ENCODE measurements at regions of chr17 and their contacts with region 1.

Region 1: DNA sequence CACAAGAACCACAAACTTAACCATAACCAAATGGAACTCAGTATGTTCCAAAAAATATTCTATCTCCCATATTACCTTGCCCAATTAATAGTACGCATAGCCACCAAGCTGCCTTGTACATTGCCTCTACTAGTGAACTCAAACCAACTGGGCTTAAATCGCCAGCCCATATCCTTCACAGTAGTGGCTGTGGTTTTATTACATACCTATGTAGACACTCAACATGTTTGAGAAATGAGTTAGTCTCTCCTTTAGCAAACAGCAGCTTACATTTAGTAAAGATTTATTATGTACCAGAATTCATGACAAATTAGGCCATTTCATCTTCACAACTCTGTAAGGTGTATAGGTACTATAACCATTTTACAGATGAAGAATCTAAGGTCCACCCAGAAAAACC is 41.4 kb downstream of the GRB2 start:
- DNase-seq: no peak
- ATAC-seq: no peak
- H3K4me3 Mint-ChIP-seq: no peak overlapping the region
- H3K27ac Mint-ChIP-seq: peak overlapping the region; percentile 83
- H3K4me1 Mint-ChIP-seq: peaks cover 94% of the 10 kb centered on the region
- H3K27me3 Mint-ChIP-seq: no peaks in the 10 kb centered on the region

Region 2: DNA sequence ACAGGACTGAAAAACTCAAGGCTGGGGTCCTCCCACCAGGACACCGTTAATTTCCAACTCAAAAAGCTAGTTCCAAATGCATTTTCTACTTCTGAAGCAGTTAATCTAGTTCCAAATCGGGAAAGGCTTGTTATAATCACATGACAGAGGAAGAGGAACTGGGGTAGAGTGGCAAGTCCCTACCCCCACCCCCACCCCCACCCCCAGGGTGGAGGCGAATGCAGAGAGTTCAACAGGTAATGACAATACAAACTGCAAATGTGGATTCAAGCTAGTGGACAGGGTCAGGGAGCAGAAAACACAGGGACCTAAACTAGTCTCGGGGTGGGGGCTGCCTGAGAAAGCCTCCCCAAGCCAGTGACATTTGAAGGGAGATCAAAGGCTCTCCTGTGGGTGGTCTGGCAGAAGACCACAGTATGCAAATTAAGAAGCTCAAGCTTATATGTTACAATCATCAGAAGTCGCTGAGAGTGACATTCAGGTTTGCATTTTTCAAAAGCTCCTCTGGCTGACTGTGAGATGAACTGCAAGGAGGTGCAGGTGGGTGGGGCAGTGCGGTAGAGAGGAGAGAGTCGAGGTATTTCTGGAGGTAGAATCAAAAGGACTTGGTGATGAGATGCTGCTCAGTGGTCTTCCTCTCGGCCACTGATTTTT is 18.4 kb before region 1 on chr17:
- CTCF ChIA-PET with region 1: interaction called, 7 read pairs
- POLR2A ChIA-PET with region 1: interaction called, 5 read pairs
- intact Hi-C with region 1: loop called in 1 of 2 experiments (anchors 2 kb)
- DNase-seq: peak; percentile 74
- ATAC-seq: peak; percentile 58
- H3K4me3 Mint-ChIP-seq: peak overlapping the region; percentile 60
- H3K27ac Mint-ChIP-seq: peak overlapping the region; percentile 90
- H3K4me1 Mint-ChIP-seq: peaks cover 97% of the 10 kb centered on the region
- H3K27me3 Mint-ChIP-seq: no peaks in the 10 kb centered on the region

Region 3: DNA sequence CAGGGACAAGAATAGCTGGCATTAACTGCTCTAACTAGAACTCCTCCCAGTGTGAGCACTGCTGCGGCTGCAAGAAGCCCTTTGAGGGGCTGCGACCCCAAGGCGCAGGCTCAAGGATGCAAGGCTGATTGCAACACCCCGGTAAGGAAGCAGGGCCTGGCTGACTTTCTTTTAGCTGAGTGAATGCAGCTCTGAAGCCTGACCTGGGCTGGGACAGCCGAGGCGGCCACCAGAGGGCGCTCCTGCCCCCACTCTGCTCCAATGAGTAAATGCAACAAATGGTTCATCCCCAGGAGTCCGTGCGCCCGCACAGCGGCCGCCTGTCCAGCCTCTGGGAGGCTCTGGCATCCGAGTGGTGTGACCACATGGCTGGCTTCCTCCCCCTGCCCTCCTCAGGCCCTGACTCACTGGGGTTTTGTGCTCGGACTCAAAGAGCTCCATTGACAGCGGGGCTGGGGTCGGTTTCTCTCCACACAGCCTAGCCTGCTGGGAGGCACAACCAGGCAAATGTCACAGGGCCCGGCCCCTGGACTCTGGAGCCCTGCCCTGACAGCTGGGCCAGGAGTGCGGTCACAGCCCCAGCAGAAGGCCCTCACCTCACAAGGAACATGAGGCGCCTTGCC is 268.9 kb after region 1 on chr17 and contains the start of gene SMIM5:
- CTCF ChIA-PET with region 1: no interaction called
- POLR2A ChIA-PET with region 1: no interaction called
- intact Hi-C with region 1: no loop called
- DNase-seq: peak; percentile 92
- ATAC-seq: peak; percentile 93
- H3K4me3 Mint-ChIP-seq: no peak within 1 kb of the TSS
- H3K27ac Mint-ChIP-seq: no peak within 1 kb of the TSS
- H3K4me1 Mint-ChIP-seq: peaks cover 5% of the 10 kb centered on the region
- H3K27me3 Mint-ChIP-seq: no peaks in the 10 kb centered on the region
- total RNA-seq, gene SMIM5: 0.12 to 0.14 TPM

Measured in activated CD4-positive, alpha-beta T cell treated with anti-CD3 and anti-CD28 coated beads for 36 hours (primary cell).